Activated CD4-positive, alpha-beta memory T cell treated with anti-CD3 and anti-CD28 coated beads for 36 hours (primary cell): ENCODE measurements at regions of chr1 and their contacts with region 1.

Region 1: GRCh38 chr1:31663622-31664452 is 19.2 kb upstream of the PEF1 start:
- DNase-seq: peak; percentile 69
- H3K4me3 Mint-ChIP-seq: no peak overlapping the region
- H3K27ac Mint-ChIP-seq: no peak overlapping the region
- H3K4me1 Mint-ChIP-seq: no peaks in the 10 kb centered on the region
- H3K27me3 Mint-ChIP-seq: peaks cover 3% of the 10 kb centered on the region

Region 2: GRCh38 chr1:31531177-31531999 is 132.4 kb before region 1 on chr1:
- CTCF ChIA-PET with region 1: no interaction called
- POLR2A ChIA-PET with region 1: no interaction called
- intact Hi-C with region 1: no loop called
- DNase-seq: no peak
- H3K4me3 Mint-ChIP-seq: no peak overlapping the region
- H3K27ac Mint-ChIP-seq: no peak overlapping the region
- H3K4me1 Mint-ChIP-seq: peaks cover 7% of the 10 kb centered on the region
- H3K27me3 Mint-ChIP-seq: peaks cover 13% of the 10 kb centered on the region

Region 3: GRCh38 chr1:31705080-31705866 is 41.4 kb after region 1 on chr1:
- CTCF ChIA-PET with region 1: interaction called, 5 read pairs
- POLR2A ChIA-PET with region 1: no interaction called
- intact Hi-C with region 1: loop called (anchors 1 kb)
- DNase-seq: peak; percentile 88
- H3K4me3 Mint-ChIP-seq: peak overlapping the region; percentile 17
- H3K27ac Mint-ChIP-seq: no peak overlapping the region
- H3K4me1 Mint-ChIP-seq: peaks cover 37% of the 10 kb centered on the region
- H3K27me3 Mint-ChIP-seq: peaks cover 30% of the 10 kb centered on the region

Region 4: GRCh38 chr1:31715087-31715872 is 51.4 kb after region 1 on chr1:
- CTCF ChIA-PET with region 1: interaction called, 10 read pairs
- POLR2A ChIA-PET with region 1: no interaction called
- intact Hi-C with region 1: no loop called
- DNase-seq: peak; percentile 63
- H3K4me3 Mint-ChIP-seq: peak overlapping the region; percentile 39
- H3K27ac Mint-ChIP-seq: no peak overlapping the region
- H3K4me1 Mint-ChIP-seq: peaks cover 11% of the 10 kb centered on the region
- H3K27me3 Mint-ChIP-seq: peaks cover 41% of the 10 kb centered on the region

Region 5: GRCh38 chr1:31745096-31745945 is 81.5 kb after region 1 on chr1:
- CTCF ChIA-PET with region 1: interaction called, 22 read pairs
- POLR2A ChIA-PET with region 1: no interaction called
- intact Hi-C with region 1: loop called (anchors 1 kb)
- DNase-seq: peak; percentile 76
- H3K4me3 Mint-ChIP-seq: no peak overlapping the region
- H3K27ac Mint-ChIP-seq: no peak overlapping the region
- H3K4me1 Mint-ChIP-seq: peaks cover under 1% of the 10 kb centered on the region
- H3K27me3 Mint-ChIP-seq: peaks cover 1% of the 10 kb centered on the region